ENCODE measurements at regions of chr1 and their contacts with region 1.

Region 1: DNA sequence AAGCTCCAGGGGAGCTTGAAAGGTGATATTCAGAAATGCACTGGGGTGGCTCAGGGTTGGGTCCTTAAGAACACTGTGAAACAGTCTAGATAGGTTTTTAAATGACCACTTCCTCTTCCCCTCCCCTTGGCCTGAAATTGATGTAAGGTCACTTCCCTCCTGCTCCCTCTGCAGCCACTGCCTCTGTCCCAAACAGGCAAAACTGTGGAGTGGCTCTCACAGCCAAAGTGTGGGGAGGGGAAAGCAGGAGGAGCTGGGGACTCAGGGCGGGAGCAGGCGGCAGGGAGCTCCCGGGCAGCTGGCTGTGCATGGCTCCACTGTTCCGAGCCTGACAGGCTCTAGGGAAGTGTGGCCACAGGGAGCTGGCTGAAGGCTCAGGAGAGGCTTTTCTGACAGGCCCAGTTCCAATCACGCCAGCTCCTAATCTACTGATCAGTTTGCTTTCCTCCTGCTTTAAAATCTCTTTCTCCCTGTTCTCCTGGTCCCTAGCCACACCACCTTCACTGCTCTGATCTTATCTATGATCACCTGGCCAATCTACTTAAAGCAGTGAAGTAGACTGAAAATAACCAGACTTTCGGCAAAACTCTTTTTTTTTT is 5.1 kb upstream of the CSRP1 start:
- DNase-seq: no peak
- ATAC-seq: no peak
- H3K4me3 ChIP-seq: no peak overlapping the region
- H3K4me3 Mint-ChIP-seq: no peak overlapping the region
- H3K27ac ChIP-seq: no peak overlapping the region
- H3K27ac Mint-ChIP-seq: no peak overlapping the region
- H3K4me1 ChIP-seq: peaks cover 7 to 11% of the 10 kb centered on the region in 2 donors
- H3K4me1 Mint-ChIP-seq: peaks cover 20% of the 10 kb centered on the region
- H3K27me3 ChIP-seq: no peaks in the 10 kb centered on the region
- H3K27me3 Mint-ChIP-seq: no peaks in the 10 kb centered on the region
- CTCF ChIP-seq: no peak

Region 2: DNA sequence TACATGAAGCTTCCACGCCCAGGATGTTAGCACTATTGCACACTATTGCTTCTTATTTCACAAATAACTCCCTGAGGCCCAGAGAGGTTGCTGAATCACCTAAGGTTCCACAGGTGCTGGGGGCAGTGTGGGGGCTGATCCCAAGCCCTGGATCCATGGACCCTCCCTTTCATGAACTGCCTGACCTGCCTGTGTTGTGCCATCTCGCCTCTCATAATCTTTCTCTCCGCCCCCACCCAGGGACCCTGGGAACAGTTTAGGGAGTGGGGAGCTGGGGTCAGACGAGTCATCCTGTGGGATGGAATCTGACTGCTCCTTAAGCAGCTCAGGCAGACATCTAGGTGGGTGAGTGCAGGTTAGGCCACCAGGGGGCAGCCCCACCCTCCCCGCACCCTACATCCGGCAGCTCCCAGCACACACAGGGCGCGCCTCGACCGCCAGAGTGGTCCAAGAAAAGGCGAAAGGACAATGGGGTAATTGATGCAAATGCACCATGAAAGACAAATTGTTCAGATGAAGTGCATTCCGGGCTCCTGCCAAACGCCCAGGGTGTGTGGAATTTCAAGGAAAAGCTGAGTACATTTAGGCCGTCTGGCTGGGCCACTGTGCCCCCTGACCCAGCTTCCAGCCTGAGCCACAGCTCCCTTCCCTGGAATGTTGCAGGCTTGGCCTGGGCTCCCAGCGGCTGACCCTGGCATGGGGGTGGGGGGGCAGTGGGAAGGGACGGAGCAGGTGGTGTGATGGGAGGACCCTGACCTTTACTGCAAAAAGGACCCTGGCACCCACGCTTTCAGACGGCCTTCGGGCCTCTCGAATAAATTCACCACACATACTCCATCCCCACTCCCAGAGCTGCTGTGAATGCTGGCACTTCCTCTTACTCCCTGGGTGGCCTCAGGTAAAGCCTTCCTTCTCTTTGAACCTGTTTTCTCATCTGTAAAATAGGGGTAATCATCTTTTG is 63.8 kb before region 1 on chr1:
- CTCF ChIA-PET with region 1: interaction called, 104 read pairs
- POLR2A ChIA-PET with region 1: no interaction called
- intact Hi-C with region 1: loop called (anchors 1 kb)
- DNase-seq: peak; percentile 68
- ATAC-seq: peak; percentile 70
- H3K4me3 ChIP-seq: no peak overlapping the region
- H3K4me3 Mint-ChIP-seq: no peak overlapping the region
- H3K27ac ChIP-seq: no peak overlapping the region
- H3K27ac Mint-ChIP-seq: no peak overlapping the region
- H3K4me1 ChIP-seq: peaks cover 9 to 17% of the 10 kb centered on the region in 2 donors
- H3K4me1 Mint-ChIP-seq: peaks cover 4% of the 10 kb centered on the region
- H3K27me3 ChIP-seq: peaks cover 0 to 9% (median 1%) of the 10 kb centered on the region in 4 experiments
- H3K27me3 Mint-ChIP-seq: peaks cover 22% of the 10 kb centered on the region
- CTCF ChIP-seq: peak; percentile 75

Region 3: GRCh38 chr1:201488817-201489589 is 23.0 kb before region 1 on chr1:
- CTCF ChIA-PET with region 1: interaction called, 407 read pairs
- POLR2A ChIA-PET with region 1: no interaction called
- intact Hi-C with region 1: no loop called
- DNase-seq: no peak
- ATAC-seq: no peak
- H3K4me3 ChIP-seq: no peak overlapping the region
- H3K4me3 Mint-ChIP-seq: no peak overlapping the region
- H3K27ac ChIP-seq: no peak overlapping the region
- H3K27ac Mint-ChIP-seq: no peak overlapping the region
- H3K4me1 ChIP-seq: no peaks in the 10 kb centered on the region
- H3K4me1 Mint-ChIP-seq: peaks cover 8% of the 10 kb centered on the region
- H3K27me3 ChIP-seq: no peaks in the 10 kb centered on the region
- H3K27me3 Mint-ChIP-seq: no peaks in the 10 kb centered on the region
- CTCF ChIP-seq: no peak

Region 4: DNA sequence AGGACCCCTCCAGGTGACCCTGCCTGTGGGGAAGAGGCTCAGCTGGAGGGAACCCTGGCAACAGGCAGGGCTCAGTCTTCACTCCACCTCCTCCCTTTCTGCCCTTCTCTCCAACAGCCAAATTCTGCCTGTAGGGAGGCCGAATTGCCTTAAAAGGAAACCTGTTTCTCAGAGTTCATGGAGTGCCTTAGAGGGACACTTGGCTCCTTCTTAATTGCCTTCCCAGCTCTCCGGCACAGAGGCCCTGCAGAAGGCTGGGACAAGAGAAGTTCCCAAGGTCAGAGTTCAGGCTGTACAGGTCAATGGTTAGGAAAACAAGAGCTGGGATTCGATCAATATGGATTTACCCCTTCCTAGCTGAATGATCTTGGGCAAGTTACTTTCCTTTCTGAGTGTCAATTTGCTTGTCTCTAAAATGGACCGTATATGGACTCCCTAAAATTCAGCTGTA is 11.3 kb before region 1 on chr1:
- CTCF ChIA-PET with region 1: interaction called, 59 read pairs
- POLR2A ChIA-PET with region 1: no interaction called
- intact Hi-C with region 1: no loop called
- DNase-seq: no peak
- ATAC-seq: no peak
- H3K4me3 ChIP-seq: no peak overlapping the region
- H3K4me3 Mint-ChIP-seq: no peak overlapping the region
- H3K27ac ChIP-seq: no peak overlapping the region
- H3K27ac Mint-ChIP-seq: no peak overlapping the region
- H3K4me1 ChIP-seq: peaks cover 5 to 7% of the 10 kb centered on the region in 2 donors
- H3K4me1 Mint-ChIP-seq: peaks cover 10% of the 10 kb centered on the region
- H3K27me3 ChIP-seq: no peaks in the 10 kb centered on the region
- H3K27me3 Mint-ChIP-seq: no peaks in the 10 kb centered on the region
- CTCF ChIP-seq: no peak

Region 5: GRCh38 chr1:201538612-201539551 is 26.8 kb after region 1 on chr1 and contains the start of gene NAV1:
- CTCF ChIA-PET with region 1: interaction called, 14 read pairs
- POLR2A ChIA-PET with region 1: no interaction called
- intact Hi-C with region 1: no loop called
- DNase-seq: peak; percentile 34
- ATAC-seq: peak; percentile 23
- H3K4me3 ChIP-seq: peak within 1 kb of the TSS in 4 of 5 experiments; percentile 17 to 55 (median 43)
- H3K4me3 Mint-ChIP-seq: peak within 1 kb of the TSS; percentile 85
- H3K27ac ChIP-seq: no peak within 1 kb of the TSS
- H3K27ac Mint-ChIP-seq: no peak within 1 kb of the TSS
- H3K4me1 ChIP-seq: peaks cover 22 to 39% of the 10 kb centered on the region in 2 donors
- H3K4me1 Mint-ChIP-seq: peaks cover 34% of the 10 kb centered on the region
- H3K27me3 ChIP-seq: peaks cover 0 to 52% (median 33%) of the 10 kb centered on the region in 4 experiments
- H3K27me3 Mint-ChIP-seq: peaks cover 51% of the 10 kb centered on the region
- CTCF ChIP-seq: no peak
- total RNA-seq, gene NAV1: 4.3 and 4.7 TPM in 2 replicates